ENCODE measurements at regions of chr12 and their contacts with region 1.

Region 1: DNA sequence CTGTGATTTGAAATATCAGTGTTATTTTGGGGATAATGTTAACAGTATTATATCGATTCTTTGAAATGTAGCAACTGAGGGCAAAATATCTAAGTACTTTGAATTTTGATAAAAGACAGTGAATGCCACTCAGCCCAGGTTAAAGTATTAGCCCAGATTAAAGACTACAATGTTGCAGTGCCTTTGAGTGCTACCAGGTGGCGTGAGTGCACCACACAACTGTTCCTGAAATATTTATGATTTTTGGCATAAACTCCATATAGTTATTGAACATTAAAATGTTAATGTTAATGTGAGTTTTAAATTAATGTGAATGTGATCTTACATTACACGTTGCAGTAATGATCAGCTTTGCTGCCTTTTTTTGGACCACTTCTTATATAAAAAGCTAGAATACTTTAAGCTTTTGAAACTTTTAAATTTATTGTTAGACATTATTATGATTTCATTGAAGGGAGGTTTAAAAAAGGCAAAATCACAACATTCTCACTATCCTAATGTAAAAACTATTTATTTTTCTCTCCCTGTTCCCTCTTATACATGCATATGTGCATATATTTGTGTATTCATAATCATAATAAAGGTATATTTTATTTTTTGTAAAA is 22.5 kb downstream of the MRPS35 start:
- DNase-seq: peak; percentile 41 to 64 (median 48)
- ATAC-seq: peak; percentile 68
- H3K4me3 ChIP-seq: no peak overlapping the region
- H3K27ac ChIP-seq: no peak overlapping the region
- H3K4me1 ChIP-seq: no peaks in the 10 kb centered on the region
- H3K27me3 ChIP-seq: no peaks in the 10 kb centered on the region
- CTCF ChIP-seq: peak; percentile 50 to 94 (median 86)
- POLR2A ChIP-seq: no peak

Region 2: GRCh38 chr12:27635349-27635972 is 97.7 kb before region 1 on chr12:
- intact Hi-C with region 1: no loop called
- DNase-seq: peak in 1 of 4 donors; percentile 13
- ATAC-seq: peak; percentile 55
- H3K4me3 ChIP-seq: no peak overlapping the region
- H3K27ac ChIP-seq: no peak overlapping the region
- H3K4me1 ChIP-seq: peaks cover 11% of the 10 kb centered on the region
- H3K27me3 ChIP-seq: no peaks in the 10 kb centered on the region
- CTCF ChIP-seq: peak; percentile 18 to 77 (median 75)
- POLR2A ChIP-seq: no peak

Region 3: DNA sequence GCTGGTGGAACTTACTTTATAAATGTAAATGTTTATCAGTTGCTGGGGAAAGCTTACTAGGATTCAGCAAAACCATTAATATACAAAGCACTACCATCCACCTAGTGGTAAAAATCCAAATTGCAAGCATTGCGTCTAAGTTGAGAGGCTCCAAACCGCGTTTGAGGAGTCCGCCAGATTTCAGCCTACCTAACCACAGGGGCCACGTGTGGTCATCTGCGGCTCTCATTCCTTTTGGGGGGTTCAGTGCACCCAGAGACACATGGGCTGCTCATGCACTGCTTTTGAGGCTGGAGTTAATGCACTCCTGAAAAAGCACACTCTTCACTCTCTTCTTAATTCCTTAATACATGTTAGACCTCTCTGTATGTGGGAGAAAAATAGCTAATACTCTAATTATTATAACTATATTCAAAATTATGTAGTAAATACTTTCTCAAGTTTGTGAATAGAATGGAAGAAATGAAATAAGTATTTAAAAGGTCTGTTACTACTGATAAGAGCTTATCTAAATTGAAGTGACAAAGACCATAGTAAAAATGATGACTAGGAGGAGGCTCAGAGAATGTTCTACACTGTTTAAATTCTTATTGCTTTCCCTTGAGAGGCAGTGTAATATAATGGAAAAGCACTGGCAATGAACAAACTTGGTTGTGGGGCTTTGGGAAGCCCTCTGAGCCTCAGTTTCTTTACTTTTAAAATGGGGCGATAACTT is 88.3 kb after region 1 on chr12:
- intact Hi-C with region 1: loop called (anchors 10 kb)
- DNase-seq: peak; percentile 44 to 67 (median 56)
- ATAC-seq: peak; percentile 84
- H3K4me3 ChIP-seq: no peak overlapping the region
- H3K27ac ChIP-seq: no peak overlapping the region
- H3K4me1 ChIP-seq: peaks cover 33% of the 10 kb centered on the region
- H3K27me3 ChIP-seq: no peaks in the 10 kb centered on the region
- CTCF ChIP-seq: peak; percentile 56 to 81 (median 80)
- POLR2A ChIP-seq: no peak

Region 4: GRCh38 chr12:27936196-27936595 is 203.0 kb after region 1 on chr12:
- intact Hi-C with region 1: loop called (anchors 5 kb)
- DNase-seq: no peak
- ATAC-seq: no peak
- H3K4me3 ChIP-seq: no peak overlapping the region
- H3K27ac ChIP-seq: no peak overlapping the region
- H3K4me1 ChIP-seq: no peaks in the 10 kb centered on the region
- H3K27me3 ChIP-seq: no peaks in the 10 kb centered on the region
- CTCF ChIP-seq: no peak
- POLR2A ChIP-seq: no peak

Region 5: DNA sequence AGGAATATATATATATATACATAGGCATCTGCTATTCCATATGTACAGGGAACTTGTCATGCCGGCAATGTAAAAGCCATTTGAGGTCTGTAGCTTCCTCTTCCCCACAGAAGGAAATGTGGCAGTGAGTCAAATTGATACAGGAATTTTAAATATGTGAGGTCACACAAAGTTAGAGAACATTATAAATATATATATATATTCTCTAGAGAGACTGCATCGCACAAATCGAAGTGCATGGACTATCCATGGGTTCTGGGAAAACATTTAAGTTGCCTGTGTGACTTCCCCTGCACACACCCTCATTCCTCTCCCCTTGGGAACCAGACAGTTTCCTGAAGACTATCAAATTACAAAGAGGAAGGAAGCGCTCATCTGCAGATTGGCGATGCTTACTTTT is 356.2 kb after region 1 on chr12:
- intact Hi-C with region 1: no loop called
- DNase-seq: no peak
- ATAC-seq: no peak
- H3K4me3 ChIP-seq: no peak overlapping the region
- H3K27ac ChIP-seq: no peak overlapping the region
- H3K4me1 ChIP-seq: no peaks in the 10 kb centered on the region
- H3K27me3 ChIP-seq: no peaks in the 10 kb centered on the region
- CTCF ChIP-seq: no peak
- POLR2A ChIP-seq: no peak

Measured in body of pancreas (tissue), 4 donors.